Right ventricle myocardium inferior (tissue), 1 donor: ENCODE measurements at regions of chr22 and their contacts with region 1.

Region 1: GRCh38 chr22:23521441-23522113 is 58.5 kb downstream of the IGLL1 start:
- DNase-seq: peak; percentile 94
- ATAC-seq: peak; percentile 93

Region 2: DNA sequence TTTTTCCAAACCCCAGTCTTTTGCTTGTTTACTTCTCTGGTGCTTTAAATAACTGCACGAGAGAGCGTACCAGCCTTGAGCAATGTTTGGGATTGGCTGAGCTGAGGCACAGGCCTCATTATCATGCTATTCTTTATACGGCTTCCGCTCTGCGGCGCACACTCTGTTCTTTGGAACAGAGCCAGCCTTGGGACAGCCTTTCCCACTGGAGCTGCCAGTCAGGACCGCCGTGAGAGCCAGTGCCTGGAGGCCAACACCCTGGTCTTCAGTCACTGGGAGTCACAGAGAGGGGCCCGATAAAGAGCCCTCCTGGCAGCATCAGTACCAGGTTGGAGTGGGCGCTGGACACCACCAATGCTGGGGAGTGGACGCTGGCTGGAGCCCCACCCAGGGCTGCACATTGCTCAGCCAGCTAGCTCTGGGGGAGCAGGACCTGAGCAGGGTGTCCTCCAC is 215.6 kb before region 1 on chr22:
- intact Hi-C with region 1: loop called (anchors 10 kb)
- DNase-seq: peak; percentile 85
- ATAC-seq: peak; percentile 90

Region 3: DNA sequence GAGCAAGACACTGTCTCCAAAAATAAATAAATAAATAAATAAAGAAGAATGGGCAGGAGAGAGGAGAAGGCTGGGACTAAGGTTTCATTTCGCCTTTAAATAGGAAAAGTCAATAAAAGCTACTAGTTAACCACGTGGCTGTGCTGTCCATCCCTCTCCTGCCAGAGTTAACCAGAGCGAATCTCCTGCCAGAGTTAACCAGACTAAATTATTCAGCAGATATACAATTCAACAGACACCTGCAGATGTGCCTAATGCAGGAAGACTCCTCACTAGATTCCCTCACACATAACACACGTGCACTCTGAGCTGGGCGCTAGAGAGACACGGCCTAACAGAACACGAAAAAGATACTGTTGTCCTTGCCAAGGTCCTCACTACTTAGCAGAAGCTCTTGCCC is 97.5 kb before region 1 on chr22:
- intact Hi-C with region 1: loop called (anchors 10 kb)
- DNase-seq: no peak
- ATAC-seq: no peak

Region 4: GRCh38 chr22:23604939-23605712 is 83.5 kb after region 1 on chr22:
- intact Hi-C with region 1: no loop called
- DNase-seq: no peak
- ATAC-seq: no peak